GM10248 (cell line): ENCODE measurements at regions of chr7 and their contacts with region 1.

Region 1: GRCh38 chr7:98745722-98746318 is 124.0 kb downstream of the TMEM130 start:
- DNase-seq: peak; percentile 77
- CTCF ChIP-seq: peak; percentile 84

Region 2: GRCh38 chr7:98294796-98295382 is 450.9 kb before region 1 on chr7:
- CTCF ChIA-PET with region 1: interaction called, 15 read pairs
- POLR2A ChIA-PET with region 1: no interaction called
- DNase-seq: peak; percentile 80
- CTCF ChIP-seq: peak; percentile 70

Region 3: GRCh38 chr7:98434095-98434494 is 311.7 kb before region 1 on chr7:
- CTCF ChIA-PET with region 1: interaction called, 11 read pairs
- POLR2A ChIA-PET with region 1: no interaction called
- DNase-seq: no peak
- CTCF ChIP-seq: no peak

Region 4: DNA sequence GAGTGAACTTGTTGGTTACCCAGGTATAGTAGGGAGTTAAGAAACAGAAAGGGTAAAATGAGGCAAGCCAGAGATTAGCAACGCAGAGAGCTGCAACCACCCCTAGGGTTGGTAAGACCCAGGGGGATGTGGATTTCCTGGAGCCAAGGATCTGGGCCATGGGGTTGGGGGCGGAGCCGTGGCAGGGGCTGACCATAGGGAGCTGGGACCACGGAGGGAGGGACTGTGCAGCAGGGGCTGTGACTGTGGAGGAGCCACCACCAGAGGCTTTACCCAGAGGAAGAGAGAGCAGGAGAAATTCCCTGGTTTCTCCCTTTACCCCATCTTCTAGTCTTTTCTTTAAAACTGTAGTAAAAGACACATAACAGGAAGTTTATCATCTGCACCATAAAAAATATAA is 286.3 kb before region 1 on chr7:
- CTCF ChIA-PET with region 1: no interaction called
- POLR2A ChIA-PET with region 1: no interaction called
- DNase-seq: no peak
- CTCF ChIP-seq: no peak

Region 5: DNA sequence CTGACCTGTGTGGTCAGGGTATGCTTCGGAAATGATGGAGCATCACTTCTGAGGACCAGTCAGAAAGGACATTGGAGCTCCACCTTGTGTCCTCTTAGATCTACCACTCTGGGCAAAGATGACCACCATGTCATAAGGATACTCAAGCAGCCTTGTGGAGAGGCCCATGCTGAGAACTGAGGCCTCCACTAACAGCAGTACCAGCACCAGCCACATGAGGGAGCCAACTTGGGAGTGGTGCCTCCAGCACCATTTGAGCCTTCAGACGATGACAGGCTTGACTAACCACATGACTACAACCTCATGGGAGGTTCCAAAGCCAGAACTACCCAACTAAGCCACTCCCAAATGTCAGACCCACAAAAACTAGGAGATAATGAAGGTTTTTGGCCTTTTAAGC is 12.8 kb before region 1 on chr7:
- CTCF ChIA-PET with region 1: interaction called, 17 read pairs
- POLR2A ChIA-PET with region 1: interaction called, 7 read pairs
- DNase-seq: peak; percentile 70
- CTCF ChIP-seq: peak; percentile 42

Region 6: DNA sequence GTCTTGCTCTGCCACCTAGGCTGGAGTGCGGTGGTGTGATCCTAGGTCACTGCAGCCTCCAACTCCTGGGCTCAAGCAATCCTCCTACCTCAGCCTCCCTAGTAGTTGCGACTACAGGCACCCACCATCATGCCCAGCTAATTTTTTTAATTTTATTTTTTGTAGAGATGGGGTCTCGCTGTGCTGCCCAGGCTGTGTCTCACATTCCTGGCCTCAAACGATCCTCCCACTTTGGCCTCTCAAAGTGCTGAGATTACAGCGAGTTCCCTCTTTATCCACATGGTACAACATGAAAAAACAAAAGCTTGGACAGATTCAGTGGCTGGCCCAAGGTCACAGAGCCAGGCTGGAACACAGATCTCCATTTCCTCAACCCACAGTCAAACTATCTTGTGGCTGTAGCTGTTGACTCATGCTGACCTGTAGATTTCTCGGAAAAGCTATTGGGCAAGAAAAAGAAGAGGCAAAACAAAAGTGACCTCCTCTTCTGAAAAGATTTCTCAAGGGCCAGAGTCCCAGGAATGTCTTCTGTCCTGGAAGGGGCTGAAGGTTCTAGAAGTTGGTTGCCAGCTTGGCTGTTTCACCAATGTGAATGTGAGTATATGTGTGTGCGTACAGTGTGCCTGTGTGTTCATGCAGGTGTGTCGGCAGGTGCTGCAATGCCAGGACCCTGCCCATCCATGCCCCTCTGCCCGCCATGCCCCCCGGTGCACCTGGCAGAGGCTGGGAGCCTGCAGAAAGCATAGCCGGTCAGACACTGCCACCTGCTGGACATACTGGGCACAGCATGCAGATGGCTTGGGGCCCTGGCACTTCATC is 95.6 kb after region 1 on chr7:
- CTCF ChIA-PET with region 1: interaction called, 17 read pairs
- POLR2A ChIA-PET with region 1: no interaction called
- DNase-seq: peak; percentile 75
- CTCF ChIP-seq: peak; percentile 95